GM13977 (cell line): ENCODE measurements at regions of chr16 and their contacts with region 1.

Region 1: GRCh38 chr16:19167710-19168370 is at the start of gene SYT17:
- DNase-seq: peak; percentile 94
- CTCF ChIP-seq: peak; percentile 92

Region 2: GRCh38 chr16:19086322-19087199 is 81.3 kb before region 1 on chr16:
- in situ Hi-C with region 1: loop called (anchors 10 kb)
- DNase-seq: peak; percentile 83
- CTCF ChIP-seq: peak; percentile 99